ENCODE measurements at regions of chr2 and their contacts with region 1.

Region 1: GRCh38 chr2:65064728-65065552 is 8.7 kb downstream of the CEP68 start:
- DNase-seq: peak; percentile 78 to 87
- ATAC-seq: peak; percentile 61 to 73 (median 68)
- H3K4me3 ChIP-seq: peak overlapping the region; percentile 47
- H3K27ac ChIP-seq: peak overlapping the region; percentile 94
- H3K4me1 ChIP-seq: peaks cover 95% of the 10 kb centered on the region
- H3K27me3 ChIP-seq: no peaks in the 10 kb centered on the region
- CTCF ChIP-seq: peak; percentile 84

Region 2: DNA sequence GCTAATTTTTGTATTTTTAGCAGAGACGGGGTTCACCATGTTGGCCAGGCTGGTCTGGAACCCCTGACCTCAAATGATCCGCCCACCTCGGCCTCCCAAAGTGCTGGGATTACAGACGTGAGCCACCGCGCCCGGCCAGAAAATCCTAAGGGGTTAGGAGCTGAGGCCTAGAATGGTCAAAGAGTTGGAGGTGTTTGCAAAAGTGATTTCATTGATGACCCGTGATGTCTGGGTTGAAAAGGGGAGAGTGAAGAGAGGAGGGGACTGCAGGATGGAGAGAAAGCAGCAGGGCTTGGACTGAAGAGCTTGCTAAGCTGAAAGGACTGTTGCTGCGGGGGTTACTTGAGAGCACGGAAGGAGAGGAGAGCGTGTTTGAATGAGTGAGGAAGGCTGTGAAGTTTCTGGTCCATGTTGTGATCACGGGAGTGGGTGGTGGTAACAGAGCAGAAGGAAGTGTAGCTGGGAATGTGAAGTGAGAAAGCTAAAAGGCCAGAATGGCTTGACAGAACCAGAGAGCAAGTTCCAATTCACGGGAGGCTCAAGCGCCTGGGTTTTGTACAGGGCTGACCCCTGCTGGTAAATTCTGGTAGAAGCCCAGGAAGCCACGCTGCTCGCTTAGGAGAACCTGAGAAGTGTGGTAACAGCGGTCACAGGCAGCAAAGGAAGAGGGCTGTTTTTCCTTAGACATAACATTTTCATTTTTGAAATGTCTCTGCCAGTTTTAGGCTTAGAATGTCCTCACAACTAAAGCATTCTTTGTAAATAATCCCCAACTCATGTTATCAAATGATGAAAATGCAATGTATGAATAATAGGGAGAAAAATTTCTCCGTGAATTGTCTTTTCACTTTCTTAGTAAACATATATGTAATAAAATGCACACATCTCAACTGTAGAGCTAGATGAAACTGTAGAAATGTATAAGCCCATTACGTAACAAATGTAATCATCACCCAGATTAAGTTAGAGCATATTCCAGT is 122.2 kb after region 1 on chr2:
- intact Hi-C with region 1: loop called (anchors 1 to 2 kb)
- DNase-seq: peak; percentile 69 to 79
- ATAC-seq: peak; percentile 94 to 100 (median 97)
- H3K4me3 ChIP-seq: no peak overlapping the region
- H3K27ac ChIP-seq: no peak overlapping the region
- H3K4me1 ChIP-seq: no peaks in the 10 kb centered on the region
- H3K27me3 ChIP-seq: no peaks in the 10 kb centered on the region
- CTCF ChIP-seq: peak; percentile 82

Region 3: DNA sequence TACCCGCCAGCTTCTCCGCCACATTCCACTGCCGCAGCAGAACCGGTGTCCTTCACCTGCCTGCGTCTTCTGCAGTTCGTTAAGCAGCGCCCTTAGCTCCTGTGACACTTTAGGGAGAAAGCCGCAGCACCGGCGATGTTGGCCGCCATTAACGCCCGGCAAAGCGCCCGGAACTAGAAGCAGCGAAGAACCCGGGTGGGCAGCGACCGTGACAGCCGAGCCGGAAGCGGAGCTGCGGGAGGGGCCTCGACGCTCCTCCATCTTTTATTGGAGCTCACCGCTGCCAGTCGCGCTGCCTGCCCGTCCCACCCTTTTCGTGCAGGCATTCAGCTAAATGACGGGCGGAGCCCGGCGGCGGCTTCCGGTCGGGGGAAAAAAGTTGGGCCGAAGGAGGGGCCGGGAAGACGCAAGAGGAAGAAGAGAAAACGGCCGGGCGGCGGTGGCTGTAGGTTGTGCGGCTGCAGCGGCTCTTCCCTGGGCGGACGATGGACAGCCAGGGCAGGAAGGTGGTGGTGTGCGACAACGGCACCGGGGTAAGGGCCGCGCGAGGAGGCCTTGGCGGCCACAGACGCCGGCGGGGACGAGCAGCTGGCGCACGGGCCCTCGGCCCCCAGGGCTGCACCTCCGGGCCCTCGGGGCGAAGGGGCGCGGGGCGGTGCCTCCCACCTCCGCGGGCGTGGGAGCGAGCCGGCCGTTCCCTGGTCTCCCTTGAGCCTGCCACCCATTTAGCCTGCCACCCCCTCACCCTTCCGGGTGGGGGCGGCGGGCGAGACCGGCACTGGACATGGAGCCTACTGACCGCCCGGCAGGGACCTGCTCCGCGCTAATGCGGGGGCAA is 162.7 kb after region 1 on chr2 and contains the start of gene ACTR2:
- intact Hi-C with region 1: loop called in 1 of 2 experiments (anchors 5 kb)
- DNase-seq: peak; percentile 96 to 98
- ATAC-seq: peak; percentile 97 to 98 (median 98)
- H3K4me3 ChIP-seq: peak within 1 kb of the TSS; percentile 99
- H3K27ac ChIP-seq: peak within 1 kb of the TSS; percentile 100
- H3K4me1 ChIP-seq: peaks cover 35% of the 10 kb centered on the region
- H3K27me3 ChIP-seq: no peaks in the 10 kb centered on the region
- CTCF ChIP-seq: no peak
- total RNA-seq, gene ACTR2: 72.0 to 99.0 (median 88.8) TPM

Region 4: GRCh38 chr2:65432227-65433190 is 367.6 kb after region 1 on chr2 and contains the start of gene SPRED2:
- intact Hi-C with region 1: loop called (anchors 10 kb)
- DNase-seq: peak; percentile 96
- ATAC-seq: peak; percentile 42 to 54 (median 46)
- H3K4me3 ChIP-seq: peak within 1 kb of the TSS; percentile 87
- H3K27ac ChIP-seq: peak within 1 kb of the TSS; percentile 75
- H3K4me1 ChIP-seq: peaks cover 19% of the 10 kb centered on the region
- H3K27me3 ChIP-seq: peaks cover 0 to 11% (median 0%) of the 10 kb centered on the region in 3 donors
- CTCF ChIP-seq: peak; percentile 9
- total RNA-seq, gene SPRED2: 8.5 to 16.9 (median 9.2) TPM

Region 5: GRCh38 chr2:65554765-65555591 is 490.0 kb after region 1 on chr2:
- intact Hi-C with region 1: loop called in 1 of 2 experiments (anchors 5 kb)
- DNase-seq: no peak
- ATAC-seq: peak in 2 of 4 donors; percentile 33 to 43
- H3K4me3 ChIP-seq: no peak overlapping the region
- H3K27ac ChIP-seq: no peak overlapping the region
- H3K4me1 ChIP-seq: no peaks in the 10 kb centered on the region
- H3K27me3 ChIP-seq: no peaks in the 10 kb centered on the region
- CTCF ChIP-seq: no peak

Region 6: DNA sequence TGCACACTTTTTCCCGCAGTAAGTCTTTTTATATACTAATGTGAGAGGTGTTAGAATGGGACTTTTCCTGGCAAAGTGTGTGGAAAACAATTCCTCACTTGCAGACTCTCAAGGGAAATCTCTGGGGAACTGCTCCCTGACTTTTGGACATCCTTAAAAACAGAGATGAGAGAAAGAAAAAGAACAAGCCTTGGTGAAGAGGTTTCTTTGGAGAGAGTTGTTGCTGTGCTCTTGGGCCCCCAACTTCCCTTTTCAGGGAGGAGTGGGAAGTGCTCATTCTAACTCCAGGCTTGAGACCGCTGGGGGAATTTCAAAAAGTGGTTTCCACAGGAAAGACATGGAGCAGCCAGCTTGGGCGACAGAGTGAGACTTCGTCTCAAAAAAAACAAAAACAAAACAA is 510.1 kb after region 1 on chr2:
- intact Hi-C with region 1: loop called in 1 of 2 experiments (anchors 5 kb)
- DNase-seq: no peak
- ATAC-seq: no peak
- H3K4me3 ChIP-seq: no peak overlapping the region
- H3K27ac ChIP-seq: no peak overlapping the region
- H3K4me1 ChIP-seq: no peaks in the 10 kb centered on the region
- H3K27me3 ChIP-seq: no peaks in the 10 kb centered on the region
- CTCF ChIP-seq: no peak

Measured in psoas muscle (tissue), 8 donors.